ENCODE measurements at regions of chr1 and their contacts with region 1.

Region 1: DNA sequence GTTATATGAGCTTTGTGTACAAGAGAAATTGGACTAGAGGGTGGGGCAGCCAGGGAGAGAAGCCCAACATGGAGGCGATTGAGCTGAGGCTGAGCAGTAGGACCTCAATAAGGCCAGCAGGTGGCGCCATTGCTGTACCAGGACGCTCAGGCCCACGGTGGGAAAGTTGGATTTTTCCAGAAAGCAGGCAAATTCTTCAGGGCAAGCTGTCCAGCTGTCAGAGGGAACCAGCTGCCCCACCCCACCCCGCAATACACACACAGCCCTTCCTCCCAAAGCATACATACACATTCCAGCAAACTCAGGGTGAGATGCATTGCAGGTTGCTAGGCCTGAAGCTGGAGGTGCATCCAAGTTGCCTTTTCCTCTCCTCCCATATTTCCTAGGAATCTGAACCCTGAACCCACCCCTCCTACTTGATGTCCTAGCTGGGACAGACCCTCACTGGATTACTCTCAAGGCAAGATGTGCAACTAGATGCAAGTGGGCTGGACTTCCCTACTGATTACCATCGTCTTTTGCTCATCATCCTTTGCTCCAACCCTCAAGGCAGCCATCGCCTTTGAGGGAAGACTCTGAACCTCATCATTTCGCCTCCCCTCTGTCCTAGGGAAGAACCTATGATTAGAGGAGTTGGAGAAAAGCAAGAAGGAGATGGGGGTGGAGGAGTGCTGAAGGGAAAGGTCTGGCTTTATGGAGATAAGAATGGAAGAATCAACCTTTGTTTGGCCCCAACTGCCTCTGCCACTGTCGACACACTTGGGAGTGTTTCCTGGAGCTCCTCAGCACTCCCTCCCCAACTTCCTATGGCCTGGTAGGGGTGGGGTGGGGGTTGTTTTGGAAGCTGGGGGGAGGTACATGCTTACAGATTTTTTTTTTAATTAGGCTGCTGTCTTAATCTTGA is 25.5 kb downstream of the CD34 start:
- DNase-seq: peak in 1 of 2 experiments; percentile 70
- H3K4me3 ChIP-seq: no peak overlapping the region
- H3K27ac ChIP-seq: no peak overlapping the region
- H3K4me1 ChIP-seq: no peaks in the 10 kb centered on the region; a peak in 1 of 7 replicates
- H3K27me3 ChIP-seq: no peaks in the 10 kb centered on the region; a peak in 1 of 7 replicates
- CTCF ChIP-seq: peak; percentile 92 to 97 (median 94)
- EP300 ChIP-seq: no peak
- POLR2A ChIP-seq: no peak
- RAD21 ChIP-seq: peak; percentile 93 to 95

Region 2: DNA sequence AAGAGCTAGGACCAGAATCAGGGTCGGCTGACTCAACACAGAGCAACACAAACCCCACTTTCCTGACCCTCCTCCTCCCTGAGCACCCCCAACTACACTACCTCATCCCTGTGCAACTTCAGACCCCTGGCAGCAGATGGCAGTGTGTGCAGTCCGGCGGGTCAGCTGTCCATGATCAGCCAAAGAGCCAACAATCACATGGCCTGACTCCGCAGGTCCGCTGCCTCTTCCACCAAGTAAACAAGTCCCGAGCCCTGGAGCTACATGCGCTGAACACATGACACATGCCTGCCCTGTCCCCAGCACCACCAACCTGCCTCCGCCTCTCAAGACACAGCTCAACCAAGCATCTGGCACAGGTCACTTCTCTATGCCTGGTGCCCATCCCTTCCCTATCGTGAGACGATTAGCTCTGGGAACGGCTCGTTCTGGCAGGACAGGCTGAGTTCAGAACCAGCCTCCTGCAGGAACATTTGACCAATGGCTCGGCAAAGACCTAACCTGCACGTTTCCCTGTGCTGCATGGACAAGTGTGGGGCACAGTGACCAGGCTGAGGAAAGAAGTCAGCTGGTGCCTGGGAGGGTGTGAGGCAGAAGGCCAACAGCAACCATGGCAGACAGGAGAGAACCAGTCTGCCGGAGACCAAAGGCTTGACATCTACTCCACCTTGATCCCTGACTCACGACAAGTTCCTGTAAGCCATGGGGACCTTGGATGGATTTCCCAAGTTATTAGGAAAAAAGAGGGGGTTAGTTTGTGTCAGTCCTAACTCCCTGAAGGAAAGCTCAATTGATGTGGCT is 73.3 kb before region 1 on chr1:
- CTCF ChIA-PET with region 1: interaction called, 11 read pairs
- POLR2A ChIA-PET with region 1: no interaction called
- DNase-seq: peak in 1 of 2 experiments; percentile 57
- H3K4me3 ChIP-seq: no peak overlapping the region
- H3K27ac ChIP-seq: no peak overlapping the region
- H3K4me1 ChIP-seq: no peaks in the 10 kb centered on the region; a peak in 1 of 7 replicates
- H3K27me3 ChIP-seq: no peaks in the 10 kb centered on the region
- CTCF ChIP-seq: peak; percentile 55 to 83 (median 78)
- EP300 ChIP-seq: no peak
- POLR2A ChIP-seq: no peak
- RAD21 ChIP-seq: peak; percentile 43 to 57

Region 3: GRCh38 chr1:207868774-207869721 is 16.3 kb before region 1 on chr1:
- CTCF ChIA-PET with region 1: interaction called, 180 read pairs
- POLR2A ChIA-PET with region 1: no interaction called
- DNase-seq: peak; percentile 29 to 90
- H3K4me3 ChIP-seq: peak overlapping the region; percentile 34 to 68 (median 50)
- H3K27ac ChIP-seq: no peak overlapping the region
- H3K4me1 ChIP-seq: peaks cover 0 to 8% (median 5%) of the 10 kb centered on the region in 4 experiments; a peak in 6 of 7 replicates
- H3K27me3 ChIP-seq: peaks cover 0 to 23% (median 8%) of the 10 kb centered on the region in 4 experiments; a peak in 6 of 7 replicates
- CTCF ChIP-seq: peak; percentile 69 to 82 (median 72)
- EP300 ChIP-seq: peak in 1 of 2 experiments; percentile 81; a peak in 1 of 3 replicates
- POLR2A ChIP-seq: no peak
- RAD21 ChIP-seq: peak; percentile 25 to 61

Region 4: DNA sequence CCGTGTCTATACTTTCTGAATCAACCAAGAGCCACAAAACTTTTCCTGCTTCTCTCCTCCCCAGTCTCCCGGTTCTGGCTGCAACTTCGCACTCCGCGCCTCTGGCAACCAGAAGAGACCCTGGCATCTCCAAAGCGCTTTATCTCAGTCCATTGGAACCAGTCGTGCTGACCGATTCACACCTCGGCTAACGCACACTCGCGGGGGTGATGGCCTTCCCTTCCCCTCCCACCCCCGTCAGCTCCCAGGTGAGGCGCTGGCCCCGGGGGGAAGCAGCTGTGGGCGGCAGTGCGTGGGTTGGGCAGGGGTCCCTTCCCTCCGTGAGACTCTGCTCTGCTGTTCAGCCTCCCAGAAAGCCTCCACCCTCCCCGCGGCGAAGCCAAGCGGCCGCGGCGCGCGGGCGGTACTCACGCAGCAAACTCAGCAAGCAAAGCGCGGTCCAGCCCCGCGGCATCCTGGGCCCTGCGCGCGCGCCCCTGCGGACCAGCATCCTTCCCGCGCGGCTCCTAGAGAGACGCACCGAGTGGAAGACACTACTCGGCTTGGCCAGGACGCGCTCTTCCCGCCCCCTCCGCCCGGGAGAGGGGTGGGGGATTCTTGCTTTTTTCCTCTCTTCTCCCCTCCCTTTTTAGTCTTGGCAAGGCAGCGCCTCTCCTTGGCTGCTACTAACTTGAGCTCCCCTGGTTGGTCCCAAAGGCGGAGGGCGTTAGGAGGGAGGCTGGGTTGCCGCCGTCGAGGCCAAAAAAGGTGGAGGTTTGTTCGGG is 25.4 kb after region 1 on chr1 and contains the start of gene CD34:
- CTCF ChIA-PET with region 1: interaction called, 21 read pairs
- POLR2A ChIA-PET with region 1: no interaction called
- DNase-seq: peak in 1 of 2 experiments; percentile 72
- H3K4me3 ChIP-seq: peak within 1 kb of the TSS; percentile 23 to 59 (median 26)
- H3K27ac ChIP-seq: no peak within 1 kb of the TSS
- H3K4me1 ChIP-seq: peaks cover 0 to 2% (median 0%) of the 10 kb centered on the region in 4 experiments; a peak in 1 of 7 replicates
- H3K27me3 ChIP-seq: peaks cover 11 to 42% (median 32%) of the 10 kb centered on the region in 4 experiments
- CTCF ChIP-seq: no peak
- EP300 ChIP-seq: no peak
- POLR2A ChIP-seq: no peak
- RAD21 ChIP-seq: no peak
- total RNA-seq, gene CD34: 0.39 and 0.46 TPM in 2 replicates

Region 5: GRCh38 chr1:207938016-207938415 is 52.6 kb after region 1 on chr1:
- CTCF ChIA-PET with region 1: interaction called, 27 read pairs
- POLR2A ChIA-PET with region 1: no interaction called
- DNase-seq: no peak
- H3K4me3 ChIP-seq: no peak overlapping the region
- H3K27ac ChIP-seq: no peak overlapping the region
- H3K4me1 ChIP-seq: no peaks in the 10 kb centered on the region
- H3K27me3 ChIP-seq: no peaks in the 10 kb centered on the region
- CTCF ChIP-seq: no peak
- EP300 ChIP-seq: no peak
- POLR2A ChIP-seq: no peak
- RAD21 ChIP-seq: no peak

Region 6: GRCh38 chr1:207963427-207964194 is 78.2 kb after region 1 on chr1:
- CTCF ChIA-PET with region 1: interaction called, 223 read pairs
- POLR2A ChIA-PET with region 1: interaction called, 10 read pairs
- DNase-seq: peak in 1 of 2 experiments; percentile 94
- H3K4me3 ChIP-seq: peak overlapping the region; percentile 30 to 64 (median 53)
- H3K27ac ChIP-seq: no peak overlapping the region; the same call in 1 of the 2 replicates
- H3K4me1 ChIP-seq: peaks cover 0 to 17% (median 5%) of the 10 kb centered on the region in 4 experiments; a peak in 6 of 7 replicates
- H3K27me3 ChIP-seq: peaks cover 19 to 60% (median 41%) of the 10 kb centered on the region in 4 experiments
- CTCF ChIP-seq: peak; percentile 94 to 98 (median 95)
- EP300 ChIP-seq: no peak
- POLR2A ChIP-seq: peak in 1 of 2 experiments; percentile 93; a peak in 2 of 3 replicates
- RAD21 ChIP-seq: peak; percentile 94 to 98

Measured in H1 (cell line).